Astrocyte of the cerebellum (primary cell): ENCODE measurements at regions of chr22 and their contacts with region 1.

Region 1: GRCh38 chr22:20514658-20515406 is 7.4 kb downstream of the MED15 start:
- DNase-seq: no peak
- H3K4me3 ChIP-seq: no peak overlapping the region
- CTCF ChIP-seq: no peak

Region 2: GRCh38 chr22:20550821-20551744 is 36.3 kb after region 1 on chr22:
- in situ Hi-C with region 1: loop called (anchors 5 kb)
- DNase-seq: no peak
- H3K4me3 ChIP-seq: no peak overlapping the region
- CTCF ChIP-seq: no peak

Region 3: GRCh38 chr22:20568989-20569769 is 54.3 kb after region 1 on chr22:
- in situ Hi-C with region 1: no loop called
- DNase-seq: peak; percentile 90
- H3K4me3 ChIP-seq: no peak overlapping the region
- CTCF ChIP-seq: no peak

Region 4: GRCh38 chr22:20583471-20583922 is 68.7 kb after region 1 on chr22:
- in situ Hi-C with region 1: no loop called
- DNase-seq: no peak
- H3K4me3 ChIP-seq: no peak overlapping the region
- CTCF ChIP-seq: no peak